Activated CD8-positive, alpha-beta T cell treated with anti-CD3 and anti-CD28 coated beads, Interleukin-2, amount 10 ng/mL, durations not matched to agents 7 days and 5 days (primary cell): ENCODE measurements at regions of chr2 and their contacts with region 1.

Region 1: GRCh38 chr2:196750982-196751635 is 48.4 kb downstream of the GTF3C3 start:
- DNase-seq: peak; percentile 80
- ATAC-seq: peak; percentile 95
- H3K4me3 Mint-ChIP-seq: no peak overlapping the region
- H3K27ac Mint-ChIP-seq: no peak overlapping the region
- H3K4me1 Mint-ChIP-seq: peaks cover 27% of the 10 kb centered on the region
- H3K27me3 Mint-ChIP-seq: no peaks in the 10 kb centered on the region

Region 2: GRCh38 chr2:196729418-196729817 is 21.7 kb before region 1 on chr2:
- CTCF ChIA-PET with region 1: interaction called, 11 read pairs
- POLR2A ChIA-PET with region 1: no interaction called
- DNase-seq: no peak
- ATAC-seq: no peak
- H3K4me3 Mint-ChIP-seq: no peak overlapping the region
- H3K27ac Mint-ChIP-seq: no peak overlapping the region
- H3K4me1 Mint-ChIP-seq: peaks cover 3% of the 10 kb centered on the region
- H3K27me3 Mint-ChIP-seq: no peaks in the 10 kb centered on the region

Region 3: DNA sequence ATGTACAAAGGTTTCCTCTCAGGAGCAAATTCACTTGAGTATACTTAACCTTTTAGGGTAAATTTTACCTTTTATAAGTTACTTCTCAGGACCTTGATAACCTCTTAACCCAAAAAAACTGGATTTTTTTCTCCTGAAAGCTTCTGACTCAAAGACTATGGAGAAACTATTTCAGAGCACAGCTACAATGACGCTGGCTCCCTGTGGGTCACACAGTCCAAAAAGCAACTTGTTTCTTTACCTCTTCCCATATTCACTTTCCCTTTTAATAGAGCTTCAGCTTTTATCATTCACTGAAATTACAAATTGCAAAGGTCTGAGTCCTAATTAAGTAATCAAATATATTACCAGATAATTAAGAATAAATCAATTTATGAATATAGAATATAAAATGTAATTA is 16.0 kb after region 1 on chr2:
- CTCF ChIA-PET with region 1: interaction called, 21 read pairs
- POLR2A ChIA-PET with region 1: interaction called, 4 read pairs
- DNase-seq: no peak
- ATAC-seq: no peak
- H3K4me3 Mint-ChIP-seq: no peak overlapping the region
- H3K27ac Mint-ChIP-seq: no peak overlapping the region
- H3K4me1 Mint-ChIP-seq: no peaks in the 10 kb centered on the region
- H3K27me3 Mint-ChIP-seq: no peaks in the 10 kb centered on the region